Activated B cell treated with CpG ODN at 0.5 μM for 24 hours (primary cell): ENCODE measurements at regions of chr7 and their contacts with region 1.

Region 1: DNA sequence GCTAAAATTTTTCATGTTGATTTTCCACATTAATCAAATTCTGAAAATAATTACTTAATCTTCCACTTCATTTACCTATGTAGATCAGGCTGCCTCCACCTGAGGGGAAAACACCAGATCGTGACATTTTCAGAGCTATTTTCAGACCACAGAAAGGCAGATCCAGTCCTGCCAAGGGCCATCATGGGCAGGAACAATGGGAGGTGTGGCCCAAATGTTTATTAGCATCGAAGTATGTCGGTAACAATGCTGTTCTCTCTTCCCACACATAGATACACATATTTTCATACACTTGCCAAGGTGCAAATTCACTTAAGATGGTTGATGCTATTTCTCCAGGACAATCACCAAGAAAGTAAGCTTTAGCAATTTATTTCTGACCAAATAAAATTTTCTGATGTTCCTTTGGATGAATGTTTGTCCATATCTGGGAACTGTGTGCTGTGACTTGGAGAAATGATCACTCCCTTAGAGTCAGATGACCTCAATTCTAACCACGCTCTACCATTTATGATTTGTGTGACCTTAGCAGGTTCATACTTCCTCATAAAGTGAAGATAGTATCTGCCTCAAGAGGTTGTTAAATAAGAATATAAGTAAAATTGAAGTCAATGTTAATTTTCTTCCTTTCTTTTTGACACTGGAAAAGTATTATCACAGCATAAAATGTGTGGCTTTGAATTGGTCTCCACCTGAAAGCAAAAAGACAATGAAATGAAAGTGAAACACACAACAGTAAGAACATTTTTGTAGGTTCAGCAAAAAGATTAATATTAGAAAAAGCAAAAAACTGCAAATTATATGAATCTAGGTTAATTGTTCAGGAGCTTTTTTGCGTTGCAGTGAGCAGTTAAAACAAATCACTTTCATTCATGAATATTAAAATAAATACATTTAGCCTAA is 310.4 kb upstream of the PHF14 start:
- DNase-seq: no peak
- ATAC-seq: no peak
- H3K4me3 Mint-ChIP-seq: no peak overlapping the region
- H3K27ac Mint-ChIP-seq: no peak overlapping the region
- H3K4me1 Mint-ChIP-seq: no peaks in the 10 kb centered on the region
- H3K27me3 Mint-ChIP-seq: no peaks in the 10 kb centered on the region
- CTCF ChIP-seq: no peak

Region 2: GRCh38 chr7:9978106-9979064 is 684.8 kb before region 1 on chr7:
- CTCF ChIA-PET with region 1: no interaction called
- POLR2A ChIA-PET with region 1: no interaction called
- intact Hi-C with region 1: loop called (anchors 10 kb)
- DNase-seq: no peak
- ATAC-seq: no peak
- H3K4me3 Mint-ChIP-seq: no peak overlapping the region
- H3K27ac Mint-ChIP-seq: no peak overlapping the region
- H3K4me1 Mint-ChIP-seq: no peaks in the 10 kb centered on the region
- H3K27me3 Mint-ChIP-seq: no peaks in the 10 kb centered on the region
- CTCF ChIP-seq: no peak

Region 3: GRCh38 chr7:10618933-10619332 is 44.3 kb before region 1 on chr7:
- CTCF ChIA-PET with region 1: no interaction called
- POLR2A ChIA-PET with region 1: no interaction called
- intact Hi-C with region 1: no loop called
- DNase-seq: no peak
- ATAC-seq: no peak
- H3K4me3 Mint-ChIP-seq: no peak overlapping the region
- H3K27ac Mint-ChIP-seq: no peak overlapping the region
- H3K4me1 Mint-ChIP-seq: no peaks in the 10 kb centered on the region
- H3K27me3 Mint-ChIP-seq: no peaks in the 10 kb centered on the region
- CTCF ChIP-seq: no peak